Activated T-helper 1 cell treated with anti-CD3 and anti-CD28 coated beads, Interleukin-12 subunit alpha, Interleukin-12 subunit beta, Interleukin-2, Interleukin-4 antibody, amounts not matched to agents 30 ng/mL and 10 ng/mL and 1 ng/mL, durations not matched to agents 14 hours and 24 hours and 36 hours (primary cell): ENCODE measurements at regions of chr15 and their contacts with region 1.

Region 1: GRCh38 chr15:68492855-68493254 is 60.9 kb upstream of the ITGA11 start:
- DNase-seq: no peak
- H3K4me3 Mint-ChIP-seq: no peak overlapping the region
- H3K27ac Mint-ChIP-seq: no peak overlapping the region
- H3K4me1 Mint-ChIP-seq: no peaks in the 10 kb centered on the region
- H3K27me3 Mint-ChIP-seq: peaks cover 27% of the 10 kb centered on the region

Region 2: GRCh38 chr15:68431792-68432401 is 61.0 kb before region 1 on chr15 and contains the start of gene ITGA11:
- intact Hi-C with region 1: loop called (anchors 10 kb)
- DNase-seq: no peak
- H3K4me3 Mint-ChIP-seq: no peak within 1 kb of the TSS
- H3K27ac Mint-ChIP-seq: no peak within 1 kb of the TSS
- H3K4me1 Mint-ChIP-seq: no peaks in the 10 kb centered on the region
- H3K27me3 Mint-ChIP-seq: peaks cover 53% of the 10 kb centered on the region
- total RNA-seq, gene ITGA11: 0.23 and 0.27 TPM in 2 replicates

Region 3: GRCh38 chr15:68765602-68766368 is 272.9 kb after region 1 on chr15:
- intact Hi-C with region 1: no loop called
- DNase-seq: no peak
- H3K4me3 Mint-ChIP-seq: no peak overlapping the region
- H3K27ac Mint-ChIP-seq: no peak overlapping the region
- H3K4me1 Mint-ChIP-seq: no peaks in the 10 kb centered on the region
- H3K27me3 Mint-ChIP-seq: peaks cover 39% of the 10 kb centered on the region